ENCODE measurements at regions of chr10 and their contacts with region 1.

Region 1: DNA sequence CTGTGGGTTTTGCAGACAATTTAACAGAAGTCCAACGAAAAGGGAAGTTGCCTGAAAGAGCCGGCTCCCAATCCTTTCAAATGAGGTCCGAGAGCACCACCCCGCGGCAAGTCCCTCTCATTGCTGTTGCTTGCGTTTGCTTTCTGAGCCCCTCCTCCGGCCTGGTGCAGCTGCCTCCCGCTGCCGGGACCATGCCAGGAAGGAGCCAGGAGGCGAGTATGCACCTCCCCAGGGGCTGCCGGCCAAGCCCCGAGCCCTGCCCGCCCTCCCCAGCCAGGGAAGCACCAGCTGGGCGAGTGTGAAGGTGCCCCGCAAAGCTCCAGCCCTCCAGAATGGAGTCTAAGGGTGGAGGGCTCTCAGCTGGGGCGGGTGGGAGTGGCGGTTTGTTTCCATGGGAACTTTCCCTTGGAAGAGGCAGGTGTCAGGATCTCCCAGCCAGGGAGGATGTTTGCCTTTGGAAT is 25.8 kb upstream of the PPP2R2D start:
- DNase-seq: peak; percentile 74 to 85
- ATAC-seq: peak; percentile 75 to 91 (median 84)
- H3K4me3 ChIP-seq: no peak overlapping the region
- H3K27ac ChIP-seq: no peak overlapping the region
- H3K4me1 ChIP-seq: no peaks in the 10 kb centered on the region
- H3K27me3 ChIP-seq: peaks cover 0 to 22% (median 8%) of the 10 kb centered on the region in 3 donors
- CTCF ChIP-seq: peak; percentile 57

Region 2: DNA sequence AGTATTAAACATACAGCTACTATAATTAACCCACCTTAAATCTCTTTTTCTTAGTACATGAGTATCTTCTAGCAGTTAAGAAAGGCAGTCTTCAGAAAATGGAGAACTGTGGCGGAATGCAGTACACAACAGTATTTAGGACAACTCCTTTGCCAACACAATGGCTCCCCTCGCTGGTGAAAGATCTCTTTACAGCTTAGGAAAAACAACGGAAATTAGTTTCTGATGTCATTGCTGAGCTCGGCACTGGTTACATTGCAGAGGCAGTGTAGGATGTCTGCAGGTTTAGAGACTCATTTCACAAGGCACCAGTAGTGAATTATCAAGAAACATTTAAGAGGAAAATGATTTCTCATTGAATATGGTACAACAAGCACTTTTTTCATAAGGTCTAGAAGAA is 1695.4 kb before region 1 on chr10:
- intact Hi-C with region 1: loop called in 1 of 2 experiments (anchors 10 kb)
- DNase-seq: no peak
- ATAC-seq: peak; percentile 52 to 72 (median 62)
- H3K4me3 ChIP-seq: no peak overlapping the region
- H3K27ac ChIP-seq: no peak overlapping the region
- H3K4me1 ChIP-seq: no peaks in the 10 kb centered on the region
- H3K27me3 ChIP-seq: no peaks in the 10 kb centered on the region
- CTCF ChIP-seq: peak; percentile 42

Region 3: DNA sequence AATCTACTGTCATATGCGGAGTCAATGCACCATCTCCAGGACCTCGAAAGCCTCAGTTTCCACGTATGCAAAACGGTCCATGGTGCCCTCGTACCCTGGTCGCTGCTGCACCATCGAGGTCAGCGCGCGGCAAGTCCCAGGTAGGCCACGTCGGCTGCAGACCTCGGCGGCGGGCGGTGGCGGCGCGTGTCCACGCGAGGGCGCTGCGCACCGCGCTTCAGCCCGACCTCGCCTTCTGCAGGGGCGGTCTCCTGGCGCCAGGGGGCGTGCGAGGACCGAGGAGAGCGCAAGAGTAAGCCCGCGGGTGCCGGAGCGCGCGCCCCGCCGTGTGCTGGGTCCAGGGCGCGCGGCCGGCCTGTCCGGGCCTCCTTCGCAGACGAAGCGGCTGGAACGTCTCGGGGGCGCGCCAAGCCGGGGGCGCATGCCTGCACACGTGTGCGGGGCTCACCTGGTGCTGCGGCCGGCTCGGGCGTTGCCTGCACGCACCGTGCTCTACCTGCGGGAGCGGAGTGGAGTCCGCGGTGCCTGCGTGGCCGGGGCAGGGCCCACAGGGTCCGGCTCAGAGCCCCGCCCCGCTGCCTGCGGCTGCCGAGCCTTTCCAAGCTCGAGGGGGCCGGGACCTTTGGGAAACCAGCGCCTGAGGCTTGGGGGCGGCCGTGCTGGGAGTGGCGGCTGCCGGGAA is 1684.8 kb before region 1 on chr10:
- intact Hi-C with region 1: loop called (anchors 5 to 10 kb)
- DNase-seq: peak; percentile 89 to 94
- ATAC-seq: peak; percentile 87 to 94 (median 92)
- H3K4me3 ChIP-seq: peak overlapping the region; percentile 74
- H3K27ac ChIP-seq: no peak overlapping the region
- H3K4me1 ChIP-seq: no peaks in the 10 kb centered on the region
- H3K27me3 ChIP-seq: no peaks in the 10 kb centered on the region
- CTCF ChIP-seq: peak; percentile 100

Region 4: GRCh38 chr10:131231965-131232541 is 643.0 kb before region 1 on chr10:
- intact Hi-C with region 1: no loop called
- DNase-seq: peak in 1 of 2 donors; percentile 24
- ATAC-seq: no peak
- H3K4me3 ChIP-seq: no peak overlapping the region
- H3K27ac ChIP-seq: no peak overlapping the region
- H3K4me1 ChIP-seq: no peaks in the 10 kb centered on the region
- H3K27me3 ChIP-seq: peaks cover 0 to 10% (median 3%) of the 10 kb centered on the region in 3 donors
- CTCF ChIP-seq: no peak

Region 5: GRCh38 chr10:131453594-131454355 is 421.2 kb before region 1 on chr10:
- intact Hi-C with region 1: loop called in 1 of 2 experiments (anchors 10 kb)
- DNase-seq: peak; percentile 71 to 80
- ATAC-seq: peak in 3 of 4 donors; percentile 49 to 68 (median 64)
- H3K4me3 ChIP-seq: peak overlapping the region; percentile 44
- H3K27ac ChIP-seq: no peak overlapping the region
- H3K4me1 ChIP-seq: no peaks in the 10 kb centered on the region
- H3K27me3 ChIP-seq: peaks cover 0 to 29% (median 2%) of the 10 kb centered on the region in 3 donors
- CTCF ChIP-seq: peak; percentile 73

Measured in psoas muscle (tissue), 8 donors.